ENCODE measurements at regions of chr1 and their contacts with region 1.

Region 1: GRCh38 chr1:218785928-218786327 is 387.8 kb upstream of the LYPLAL1 start:
- DNase-seq: no peak
- H3K4me3 ChIP-seq: no peak overlapping the region
- H3K27ac ChIP-seq: no peak overlapping the region
- H3K4me1 ChIP-seq: no peaks in the 10 kb centered on the region
- H3K27me3 ChIP-seq: peaks cover 33% of the 10 kb centered on the region
- CTCF ChIP-seq: no peak

Region 2: GRCh38 chr1:218585511-218586184 is 200.3 kb before region 1 on chr1:
- CTCF ChIA-PET with region 1: interaction called, 12 read pairs
- POLR2A ChIA-PET with region 1: no interaction called
- intact Hi-C with region 1: no loop called
- DNase-seq: no peak
- H3K4me3 ChIP-seq: no peak overlapping the region
- H3K27ac ChIP-seq: no peak overlapping the region
- H3K4me1 ChIP-seq: no peaks in the 10 kb centered on the region
- H3K27me3 ChIP-seq: peaks cover 7% of the 10 kb centered on the region
- CTCF ChIP-seq: no peak

Measured in A673 (cell line).